Calu3 (cell line): ENCODE measurements at regions of chr17 and their contacts with region 1.

Region 1: DNA sequence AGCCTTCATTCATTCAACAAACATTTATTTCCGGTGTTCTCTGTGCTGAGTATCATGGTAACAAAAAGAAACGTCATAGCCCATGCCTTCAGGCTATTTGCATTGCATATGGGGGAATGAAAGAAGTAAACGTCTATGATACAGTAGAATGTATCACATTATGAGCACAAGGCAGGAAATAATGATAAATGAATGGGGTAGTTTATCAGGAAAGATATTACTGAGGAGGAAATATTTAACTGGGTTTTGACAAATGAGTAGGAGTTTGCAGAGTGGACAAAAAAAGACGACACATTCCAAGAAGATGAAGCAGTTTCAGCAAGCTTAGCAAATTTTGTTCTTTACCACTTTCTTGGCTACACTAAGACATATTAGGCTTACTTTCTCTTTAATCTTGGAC is 1.3 kb upstream of the KRTAP4-7 start:
- DNase-seq: no peak
- H3K4me3 Mint-ChIP-seq: no peak overlapping the region
- H3K27ac Mint-ChIP-seq: peak overlapping the region; percentile 0
- H3K4me1 Mint-ChIP-seq: peaks cover 24% of the 10 kb centered on the region
- H3K27me3 Mint-ChIP-seq: no peaks in the 10 kb centered on the region
- CTCF ChIP-seq: no peak

Region 2: DNA sequence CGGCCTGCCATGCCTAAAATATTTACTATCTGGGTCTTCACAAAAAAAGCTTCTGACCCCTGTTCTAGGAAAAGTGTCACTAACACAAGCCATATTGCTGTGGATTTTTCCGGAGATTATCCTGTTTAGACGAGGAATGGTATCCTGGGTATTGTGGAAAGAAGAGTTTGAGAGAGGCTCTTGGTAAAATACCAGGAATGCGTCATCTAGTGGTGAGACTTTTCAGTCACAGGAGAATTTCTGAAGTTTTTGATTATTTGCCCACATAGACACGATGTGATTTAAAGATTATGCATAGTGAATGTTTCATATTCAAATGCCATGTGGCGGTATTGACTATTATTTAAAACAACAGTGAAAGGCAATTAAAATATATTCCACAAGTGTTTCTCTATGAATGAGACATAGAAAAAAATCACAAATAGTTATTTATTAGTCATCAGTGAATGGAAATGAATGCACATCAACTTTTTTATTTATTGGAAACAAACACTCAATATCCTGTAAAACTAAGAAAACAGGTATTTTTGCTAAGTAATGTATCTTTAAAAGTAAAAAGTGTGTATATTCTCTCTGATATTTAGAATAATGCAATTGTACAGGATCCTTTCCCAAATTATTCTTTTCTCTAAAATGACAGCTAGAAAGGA is 290.7 kb before region 1 on chr17:
- CTCF ChIA-PET with region 1: no interaction called
- intact Hi-C with region 1: no loop called
- DNase-seq: peak; percentile 59
- H3K4me3 Mint-ChIP-seq: no peak overlapping the region
- H3K27ac Mint-ChIP-seq: no peak overlapping the region
- H3K4me1 Mint-ChIP-seq: no peaks in the 10 kb centered on the region
- H3K27me3 Mint-ChIP-seq: peaks cover 40% of the 10 kb centered on the region
- CTCF ChIP-seq: peak; percentile 100

Region 3: GRCh38 chr17:41107941-41108450 is 25.4 kb after region 1 on chr17:
- CTCF ChIA-PET with region 1: interaction called, 5 read pairs
- intact Hi-C with region 1: loop called (anchors 1 kb)
- DNase-seq: no peak
- H3K4me3 Mint-ChIP-seq: no peak overlapping the region
- H3K27ac Mint-ChIP-seq: peak overlapping the region; percentile 22
- H3K4me1 Mint-ChIP-seq: peaks cover 33% of the 10 kb centered on the region
- H3K27me3 Mint-ChIP-seq: no peaks in the 10 kb centered on the region
- CTCF ChIP-seq: no peak

Region 4: GRCh38 chr17:41291306-41291705 is 208.7 kb after region 1 on chr17:
- CTCF ChIA-PET with region 1: no interaction called
- intact Hi-C with region 1: no loop called
- DNase-seq: no peak
- H3K4me3 Mint-ChIP-seq: no peak overlapping the region
- H3K27ac Mint-ChIP-seq: no peak overlapping the region
- H3K4me1 Mint-ChIP-seq: peaks cover 14% of the 10 kb centered on the region
- H3K27me3 Mint-ChIP-seq: no peaks in the 10 kb centered on the region
- CTCF ChIP-seq: no peak